Activated CD8-positive, alpha-beta memory T cell treated with anti-CD3 and anti-CD28 coated beads, Interleukin-2, amount 10 ng/mL, durations not matched to agents 7 days and 5 days (primary cell): ENCODE measurements at regions of chr16 and their contacts with region 1.

Region 1: GRCh38 chr16:81873843-81874752 is 95.0 kb downstream of the PLCG2 start:
- DNase-seq: peak; percentile 84
- ATAC-seq: peak; percentile 88
- H3K4me3 Mint-ChIP-seq: no peak overlapping the region
- H3K27ac Mint-ChIP-seq: peak overlapping the region; percentile 26
- H3K4me1 Mint-ChIP-seq: peaks cover 27% of the 10 kb centered on the region
- H3K27me3 Mint-ChIP-seq: no peaks in the 10 kb centered on the region

Region 2: GRCh38 chr16:81730090-81731051 is 143.7 kb before region 1 on chr16:
- CTCF ChIA-PET with region 1: interaction called, 15 read pairs
- DNase-seq: peak; percentile 71
- ATAC-seq: peak; percentile 92
- H3K4me3 Mint-ChIP-seq: peak overlapping the region; percentile 72
- H3K27ac Mint-ChIP-seq: peak overlapping the region; percentile 79
- H3K4me1 Mint-ChIP-seq: peaks cover 17% of the 10 kb centered on the region
- H3K27me3 Mint-ChIP-seq: no peaks in the 10 kb centered on the region

Region 3: GRCh38 chr16:81774348-81774747 is 99.8 kb before region 1 on chr16:
- CTCF ChIA-PET with region 1: interaction called, 12 read pairs
- DNase-seq: no peak
- ATAC-seq: no peak
- H3K4me3 Mint-ChIP-seq: no peak overlapping the region
- H3K27ac Mint-ChIP-seq: no peak overlapping the region
- H3K4me1 Mint-ChIP-seq: peaks cover 21% of the 10 kb centered on the region
- H3K27me3 Mint-ChIP-seq: peaks cover 12% of the 10 kb centered on the region

Region 4: GRCh38 chr16:81841722-81842121 is 32.4 kb before region 1 on chr16:
- CTCF ChIA-PET with region 1: interaction called, 11 read pairs
- DNase-seq: peak; percentile 77
- ATAC-seq: peak; percentile 76
- H3K4me3 Mint-ChIP-seq: peak overlapping the region; percentile 70
- H3K27ac Mint-ChIP-seq: peak overlapping the region; percentile 85
- H3K4me1 Mint-ChIP-seq: peaks cover 73% of the 10 kb centered on the region
- H3K27me3 Mint-ChIP-seq: no peaks in the 10 kb centered on the region

Region 5: GRCh38 chr16:81861503-81861902 is 12.6 kb before region 1 on chr16:
- CTCF ChIA-PET with region 1: interaction called, 17 read pairs
- DNase-seq: no peak
- ATAC-seq: peak; percentile 57
- H3K4me3 Mint-ChIP-seq: no peak overlapping the region
- H3K27ac Mint-ChIP-seq: peak overlapping the region; percentile 65
- H3K4me1 Mint-ChIP-seq: peaks cover 18% of the 10 kb centered on the region
- H3K27me3 Mint-ChIP-seq: no peaks in the 10 kb centered on the region